ENCODE measurements at regions of chr16 and their contacts with region 1.

Region 1: DNA sequence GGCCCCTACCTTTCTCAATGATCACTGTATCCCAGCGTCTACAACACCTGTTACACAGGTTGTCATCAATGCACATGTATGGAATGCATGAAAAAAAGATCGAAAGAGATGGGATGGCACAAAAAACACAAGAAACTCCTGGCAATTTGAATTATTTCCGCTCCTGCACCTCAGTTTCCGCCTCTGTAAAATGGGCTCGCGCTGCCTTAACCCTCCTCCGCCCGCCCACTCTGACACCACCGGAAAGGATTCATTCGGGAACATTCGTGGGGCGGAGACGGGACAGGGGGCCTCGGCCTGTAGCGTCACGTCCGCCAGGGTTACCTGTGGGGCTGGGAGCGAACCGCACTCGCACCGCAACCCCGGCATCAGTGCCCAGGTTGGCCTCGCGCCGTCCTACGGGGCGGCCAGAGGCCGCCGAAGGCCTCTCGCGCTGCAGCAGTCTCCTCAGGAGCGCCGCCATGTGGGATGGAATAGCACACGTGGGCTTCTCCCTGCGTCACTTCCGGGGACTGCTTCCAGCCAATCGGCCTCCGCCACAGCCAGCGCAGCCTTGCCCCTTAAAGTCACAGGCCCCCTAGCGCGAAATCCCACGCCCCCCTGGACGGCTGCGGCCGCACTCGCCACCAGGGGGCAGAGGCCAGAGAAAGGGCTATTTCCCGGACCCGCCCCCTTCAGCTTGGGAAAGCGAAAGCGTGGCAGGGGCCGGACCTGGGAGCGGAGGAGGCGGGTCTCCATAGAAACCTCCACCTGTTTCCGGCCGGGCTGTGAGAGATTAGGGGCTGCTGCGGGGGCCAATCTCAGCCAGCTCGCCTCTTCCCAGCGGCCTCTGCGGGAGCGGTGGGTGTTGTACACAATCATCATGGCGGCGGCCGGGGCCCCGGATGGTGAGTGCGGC is at the starts of genes EARS2 and UBFD1:
- DNase-seq: peak; percentile 99
- ATAC-seq: peak; percentile 92
- H3K4me3 Mint-ChIP-seq: peak within 1 kb of the TSS; percentile 93
- H3K27ac Mint-ChIP-seq: peak within 1 kb of the TSS; percentile 87
- H3K4me1 Mint-ChIP-seq: peaks cover 24% of the 10 kb centered on the region
- H3K27me3 Mint-ChIP-seq: no peaks in the 10 kb centered on the region
- total RNA-seq, gene EARS2: 11.0 to 11.2 TPM
- total RNA-seq, gene UBFD1: 43.3 to 44.6 TPM

Region 2: DNA sequence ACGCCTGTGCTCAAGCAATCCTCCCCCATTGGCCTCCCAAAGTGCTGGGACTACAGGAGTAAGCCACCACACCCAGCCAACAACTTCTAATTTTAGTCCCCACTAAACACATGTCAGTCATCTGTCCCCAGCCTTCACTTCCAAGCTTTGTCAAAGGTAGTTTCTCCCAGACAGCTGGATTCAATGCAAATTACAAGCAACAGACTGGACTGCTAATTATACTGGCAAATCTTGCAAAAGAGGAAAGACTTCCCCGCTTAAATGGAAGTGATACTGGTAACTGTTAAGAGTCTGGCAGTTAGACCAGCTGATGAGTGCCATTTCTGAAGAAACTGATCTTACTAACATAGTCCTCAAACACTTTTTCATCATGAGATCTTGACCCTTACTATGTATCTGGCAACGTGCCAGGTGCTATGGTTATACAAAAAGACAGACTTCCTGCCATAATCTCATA is 38.7 kb before region 1 on chr16:
- POLR2A ChIA-PET with region 1: interaction called, 30 read pairs
- DNase-seq: no peak
- ATAC-seq: no peak
- H3K4me3 Mint-ChIP-seq: peak overlapping the region; percentile 33
- H3K27ac Mint-ChIP-seq: peak overlapping the region; percentile 56
- H3K4me1 Mint-ChIP-seq: peaks cover 46% of the 10 kb centered on the region
- H3K27me3 Mint-ChIP-seq: no peaks in the 10 kb centered on the region

Region 3: GRCh38 chr16:23578101-23578830 is 21.1 kb after region 1 on chr16:
- POLR2A ChIA-PET with region 1: no interaction called
- DNase-seq: no peak
- ATAC-seq: no peak
- H3K4me3 Mint-ChIP-seq: no peak overlapping the region
- H3K27ac Mint-ChIP-seq: no peak overlapping the region
- H3K4me1 Mint-ChIP-seq: no peaks in the 10 kb centered on the region
- H3K27me3 Mint-ChIP-seq: no peaks in the 10 kb centered on the region

Region 4: GRCh38 chr16:23650674-23651416 is 93.7 kb after region 1 on chr16:
- POLR2A ChIA-PET with region 1: no interaction called
- DNase-seq: no peak
- ATAC-seq: no peak
- H3K4me3 Mint-ChIP-seq: no peak overlapping the region
- H3K27ac Mint-ChIP-seq: no peak overlapping the region
- H3K4me1 Mint-ChIP-seq: peaks cover 22% of the 10 kb centered on the region
- H3K27me3 Mint-ChIP-seq: no peaks in the 10 kb centered on the region